WTC11 (cell line): ENCODE measurements at regions of chr11 and their contacts with region 1.

Region 1: GRCh38 chr11:77091146-77091940 is 11.3 kb upstream of the OMP start:
- DNase-seq: peak; percentile 94
- ATAC-seq: peak; percentile 92
- H3K4me3 Mint-ChIP-seq: no peak overlapping the region
- H3K27ac Mint-ChIP-seq: peak overlapping the region; percentile 86; the same call in 1 of the 2 replicates
- H3K4me1 Mint-ChIP-seq: peaks cover 7% of the 10 kb centered on the region
- H3K27me3 Mint-ChIP-seq: no peaks in the 10 kb centered on the region
- CTCF ChIP-seq: peak; percentile 85

Region 2: GRCh38 chr11:76721755-76722677 is 369.3 kb before region 1 on chr11:
- CTCF ChIA-PET with region 1: interaction called, 10 read pairs
- POLR2A ChIA-PET with region 1: no interaction called
- DNase-seq: peak; percentile 88
- ATAC-seq: peak; percentile 94
- H3K4me3 Mint-ChIP-seq: peak overlapping the region; percentile 39
- H3K27ac Mint-ChIP-seq: no peak overlapping the region
- H3K4me1 Mint-ChIP-seq: peaks cover 5% of the 10 kb centered on the region
- H3K27me3 Mint-ChIP-seq: peaks cover 22% of the 10 kb centered on the region
- CTCF ChIP-seq: peak; percentile 79

Region 3: GRCh38 chr11:76768088-76768908 is 323.0 kb before region 1 on chr11:
- CTCF ChIA-PET with region 1: no interaction called
- POLR2A ChIA-PET with region 1: no interaction called
- DNase-seq: no peak
- ATAC-seq: peak; percentile 21
- H3K4me3 Mint-ChIP-seq: no peak overlapping the region
- H3K27ac Mint-ChIP-seq: no peak overlapping the region
- H3K4me1 Mint-ChIP-seq: peaks cover 63% of the 10 kb centered on the region
- H3K27me3 Mint-ChIP-seq: peaks cover 12% of the 10 kb centered on the region
- CTCF ChIP-seq: no peak

Region 4: DNA sequence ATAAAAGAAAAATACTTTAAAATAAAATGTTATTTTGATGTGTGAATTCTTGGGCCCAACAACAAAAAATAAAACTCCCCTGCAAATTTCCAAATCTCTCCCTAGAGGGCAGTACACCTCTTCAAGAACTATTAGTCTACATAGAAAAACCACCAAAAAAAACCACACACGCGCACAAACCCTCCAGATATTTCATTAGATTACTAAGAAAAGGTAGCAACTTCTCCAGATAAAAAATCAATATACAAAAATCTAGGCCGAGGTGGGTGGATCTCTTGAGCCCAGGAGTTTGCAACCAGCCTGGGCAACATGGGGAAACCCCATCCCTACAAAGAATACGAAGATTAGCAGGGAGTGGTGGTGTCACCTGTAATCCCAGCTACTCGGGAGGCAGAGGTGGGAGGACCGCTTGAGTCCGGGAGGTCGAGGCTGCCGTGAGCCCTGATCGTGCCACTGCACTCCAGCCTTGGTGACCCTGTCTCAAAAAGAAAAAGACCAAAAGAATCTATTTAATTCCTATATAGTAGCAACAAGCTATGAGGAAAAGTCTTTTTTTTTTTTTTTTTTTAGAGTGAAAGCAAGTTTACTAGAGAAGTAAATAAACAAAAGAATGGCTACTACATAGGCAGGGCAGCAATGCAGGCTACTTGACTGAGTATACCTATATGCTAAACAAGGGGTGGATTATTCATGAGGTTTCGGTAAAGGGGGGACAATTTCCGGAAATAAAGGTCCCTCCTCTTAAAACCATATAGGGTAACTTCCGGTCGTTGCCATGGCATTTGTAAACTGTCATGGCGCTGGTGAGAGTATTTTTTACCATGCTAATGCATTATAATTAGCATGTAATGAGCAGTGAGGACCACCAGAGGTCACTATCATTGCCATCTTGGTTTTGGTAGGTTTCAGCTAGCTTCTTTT is 44.1 kb before region 1 on chr11:
- CTCF ChIA-PET with region 1: interaction called, 102 read pairs
- POLR2A ChIA-PET with region 1: interaction called, 3 read pairs
- DNase-seq: peak; percentile 61
- ATAC-seq: peak; percentile 80
- H3K4me3 Mint-ChIP-seq: peak overlapping the region; percentile 51
- H3K27ac Mint-ChIP-seq: peak overlapping the region; percentile 52
- H3K4me1 Mint-ChIP-seq: peaks cover 14% of the 10 kb centered on the region
- H3K27me3 Mint-ChIP-seq: peaks cover 16% of the 10 kb centered on the region
- CTCF ChIP-seq: no peak

Region 5: DNA sequence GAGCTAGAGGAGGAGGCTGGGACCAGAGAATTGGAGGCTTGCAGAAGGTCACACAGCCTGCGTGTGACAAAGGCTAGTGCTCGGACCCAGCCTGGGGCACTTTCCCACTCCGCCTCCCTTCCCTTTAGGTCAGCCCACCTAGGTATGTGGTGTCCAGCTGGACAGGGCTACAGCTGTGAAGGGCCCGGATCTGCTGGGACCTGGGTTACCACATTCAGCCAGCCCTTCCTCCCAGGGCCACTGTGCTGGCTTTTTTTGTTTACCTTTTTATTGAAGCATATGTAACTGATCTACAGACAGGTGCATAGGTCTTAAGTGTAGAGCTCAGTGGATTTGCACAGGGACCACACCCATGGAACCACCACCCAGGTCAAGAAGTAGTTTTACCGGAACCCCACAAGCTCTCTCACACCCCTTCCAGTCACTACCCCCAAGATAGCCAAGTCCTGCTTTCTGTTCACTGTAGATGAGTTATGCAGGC is 15.9 kb before region 1 on chr11:
- CTCF ChIA-PET with region 1: interaction called, 15 read pairs
- POLR2A ChIA-PET with region 1: no interaction called
- DNase-seq: no peak
- ATAC-seq: no peak
- H3K4me3 Mint-ChIP-seq: no peak overlapping the region
- H3K27ac Mint-ChIP-seq: no peak overlapping the region
- H3K4me1 Mint-ChIP-seq: 0 out of 2 replicates have a peak, but pooled peaks cover 2% of the 10 kb centered on the region
- H3K27me3 Mint-ChIP-seq: no peaks in the 10 kb centered on the region
- CTCF ChIP-seq: no peak

Region 6: GRCh38 chr11:77127232-77127911 is 36.0 kb after region 1 on chr11:
- CTCF ChIA-PET with region 1: interaction called, 20 read pairs
- POLR2A ChIA-PET with region 1: no interaction called
- DNase-seq: peak; percentile 73
- ATAC-seq: peak; percentile 66
- H3K4me3 Mint-ChIP-seq: peak overlapping the region; percentile 62
- H3K27ac Mint-ChIP-seq: no peak overlapping the region
- H3K4me1 Mint-ChIP-seq: peaks cover 21% of the 10 kb centered on the region
- H3K27me3 Mint-ChIP-seq: no peaks in the 10 kb centered on the region
- CTCF ChIP-seq: peak; percentile 98

Region 7: DNA sequence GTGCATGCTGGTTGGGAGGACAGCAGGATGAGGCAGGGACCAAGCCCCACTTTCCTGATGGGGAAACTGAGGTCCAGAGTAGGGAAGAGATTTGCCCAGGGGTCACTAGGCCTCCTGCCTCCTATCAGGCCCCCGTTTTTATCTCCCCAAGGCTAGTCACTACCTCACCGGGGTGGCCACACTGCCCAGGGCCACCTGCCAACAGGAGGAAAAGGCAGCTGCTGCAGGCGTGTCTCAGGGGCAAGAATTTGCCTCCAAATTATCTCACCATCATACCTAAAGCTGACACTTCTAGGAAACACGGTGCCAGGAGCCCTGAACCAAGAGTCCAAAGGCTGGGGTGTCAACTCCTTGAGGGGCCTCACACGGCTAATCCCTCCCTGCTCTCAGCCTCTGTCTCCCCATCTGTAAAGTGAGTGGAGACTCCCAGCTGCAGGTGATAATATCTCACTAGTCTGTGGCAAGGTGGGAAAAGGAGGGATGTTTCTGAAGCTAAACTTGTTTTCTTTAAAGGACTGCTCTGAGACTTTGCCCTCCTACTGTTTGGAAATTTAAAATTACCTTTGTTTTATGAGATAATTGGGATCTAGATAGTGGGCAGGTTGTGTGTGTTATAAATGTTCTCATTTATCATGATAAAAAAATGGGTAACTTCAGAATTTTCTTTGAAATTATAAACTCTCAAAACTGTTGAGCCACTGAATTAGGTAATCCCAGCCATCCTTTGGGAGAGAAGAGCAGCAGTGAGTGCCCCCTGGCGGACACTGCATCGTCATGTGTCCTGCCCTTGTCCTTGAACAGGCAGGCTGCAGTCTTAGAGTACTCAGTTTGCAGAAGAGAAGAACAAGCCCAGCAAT is 96.7 kb after region 1 on chr11:
- CTCF ChIA-PET with region 1: interaction called, 11 read pairs
- POLR2A ChIA-PET with region 1: no interaction called
- DNase-seq: peak; percentile 83
- ATAC-seq: peak; percentile 57
- H3K4me3 Mint-ChIP-seq: no peak overlapping the region
- H3K27ac Mint-ChIP-seq: 0 out of 2 replicates have a peak overlapping the region, but pooled peaks have one; percentile 3
- H3K4me1 Mint-ChIP-seq: peaks cover 16% of the 10 kb centered on the region
- H3K27me3 Mint-ChIP-seq: no peaks in the 10 kb centered on the region; the same call in 1 of the 2 replicates
- CTCF ChIP-seq: peak; percentile 85